Left ventricle myocardium superior (tissue), 1 donor: ENCODE measurements at regions of chr11 and their contacts with region 1.

Region 1: DNA sequence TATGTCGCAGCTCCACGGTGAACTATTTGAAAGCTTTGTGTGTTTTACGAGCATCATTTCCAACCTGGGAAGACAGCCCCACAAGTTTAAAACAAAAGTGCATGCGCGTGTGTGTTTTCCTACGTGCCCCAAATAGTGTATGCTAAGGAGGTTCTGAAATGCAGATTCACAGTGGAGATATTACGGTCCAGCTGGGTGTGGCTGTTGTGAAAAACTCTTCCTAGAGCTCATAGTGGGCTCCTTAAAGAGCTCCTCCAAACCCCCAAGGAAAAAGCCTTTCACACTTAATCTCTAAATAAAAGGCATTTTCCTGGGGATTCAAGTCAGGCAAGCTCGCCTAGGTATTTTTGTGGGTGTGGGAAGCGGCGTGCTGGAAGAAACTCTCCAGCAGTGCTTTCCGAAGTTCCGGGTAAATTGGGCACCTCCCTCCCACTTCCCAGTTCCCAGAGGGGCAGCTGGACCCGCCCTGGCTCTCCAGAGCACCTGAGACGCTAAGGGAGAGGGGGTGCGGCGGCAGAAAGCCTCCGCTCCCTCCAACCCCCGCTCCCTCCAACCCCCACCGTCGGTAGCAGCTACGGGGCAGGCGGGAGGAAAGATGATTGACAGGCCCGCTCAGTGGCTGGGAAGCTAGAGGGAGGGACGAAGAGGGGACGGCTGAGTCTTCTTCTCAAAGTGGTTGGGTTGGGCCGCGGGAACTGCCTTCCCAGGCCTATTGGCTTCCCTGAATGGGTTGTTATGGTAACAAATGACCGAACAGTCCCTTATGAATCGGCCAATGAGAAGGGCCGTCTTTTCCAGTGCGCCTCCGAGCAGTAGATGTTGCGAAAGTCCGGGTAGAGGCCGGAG is 558 bp upstream of the PCF11 start:
- DNase-seq: peak; percentile 99
- ATAC-seq: peak; percentile 95

Region 2: DNA sequence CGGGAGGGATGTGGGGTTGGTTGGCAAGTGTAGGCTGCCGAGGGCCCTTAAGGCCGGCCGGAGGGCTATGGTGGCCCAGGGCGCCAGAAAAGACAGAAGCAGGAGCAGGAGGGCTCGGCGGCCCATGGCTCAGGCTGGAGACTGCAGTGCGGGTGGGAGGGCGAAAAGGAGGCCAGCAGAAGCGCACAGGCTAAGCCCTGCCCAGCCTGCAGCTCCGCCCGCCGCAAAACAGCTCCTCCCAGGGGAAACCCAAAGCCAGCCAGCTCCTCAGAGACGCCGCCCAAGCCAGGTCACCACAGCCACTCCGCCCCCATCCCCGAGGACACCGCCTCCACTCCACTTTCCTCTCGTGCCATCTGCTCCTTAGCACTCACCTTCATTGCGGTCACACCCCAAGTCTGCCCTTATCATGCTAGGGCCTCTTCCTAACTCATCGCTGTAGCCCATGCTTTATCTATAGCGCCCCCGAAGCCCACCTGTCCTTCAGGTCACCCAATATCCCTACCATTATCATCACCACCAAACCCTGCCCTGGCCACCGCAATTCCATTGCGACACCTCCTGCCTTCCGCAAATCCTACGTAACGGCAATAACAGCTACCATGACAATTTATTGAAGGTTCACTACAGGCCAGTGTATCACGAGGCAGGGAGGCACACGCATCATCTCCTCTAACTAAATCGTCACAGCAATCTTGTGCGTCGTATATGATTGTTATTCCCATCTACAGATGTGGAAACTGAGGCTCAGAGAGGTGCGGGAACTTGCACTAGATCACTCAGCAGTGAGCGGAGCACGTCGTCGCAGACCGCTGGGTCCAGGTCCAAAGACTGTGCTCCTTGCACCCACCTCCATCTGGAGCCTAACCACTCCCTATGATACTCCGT is 255.9 kb before region 1 on chr11 and contains the start of gene PRCP:
- intact Hi-C with region 1: loop called (anchors 5 kb)
- DNase-seq: peak; percentile 94
- ATAC-seq: peak; percentile 96
- total RNA-seq, gene PRCP: 41.1 TPM

Region 3: DNA sequence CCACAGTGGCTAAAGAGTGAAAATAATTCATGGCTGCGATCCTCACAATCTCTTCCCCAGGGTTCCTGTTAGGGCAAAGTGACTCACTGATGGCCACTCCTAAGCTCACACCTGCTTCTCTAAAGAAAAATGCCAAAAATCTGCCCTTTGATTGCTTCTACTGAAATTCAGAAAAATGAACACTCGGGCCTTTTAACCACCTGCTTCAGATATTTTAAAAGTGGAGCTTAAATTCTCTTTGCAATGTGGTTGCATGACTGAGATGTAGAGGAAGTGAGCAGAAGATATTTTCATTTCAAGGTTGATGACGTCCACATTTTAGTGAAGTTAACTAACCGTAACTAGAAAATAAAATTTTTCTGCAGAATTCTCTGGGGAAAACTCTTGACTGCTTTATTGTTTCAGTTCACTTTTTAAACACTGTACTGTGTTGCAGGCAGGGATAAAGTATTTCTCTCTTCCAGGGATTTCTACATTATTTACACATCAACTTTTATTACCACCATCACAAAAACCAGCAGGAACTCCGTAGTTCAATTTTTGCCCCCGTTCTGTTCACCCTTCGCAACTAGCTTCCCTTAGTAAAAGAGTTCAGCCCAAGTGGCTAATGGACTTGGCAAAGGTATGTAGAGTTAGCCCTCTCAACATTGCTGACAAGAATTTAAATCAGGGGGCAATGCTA is 93.2 kb before region 1 on chr11:
- intact Hi-C with region 1: no loop called
- DNase-seq: no peak
- ATAC-seq: peak; percentile 77

Region 4: GRCh38 chr11:83235825-83236224 is 79.5 kb after region 1 on chr11:
- intact Hi-C with region 1: no loop called
- DNase-seq: no peak
- ATAC-seq: no peak